Prostate gland (tissue), 2 donors: ENCODE measurements at regions of chr2 and their contacts with region 1.

Region 1: DNA sequence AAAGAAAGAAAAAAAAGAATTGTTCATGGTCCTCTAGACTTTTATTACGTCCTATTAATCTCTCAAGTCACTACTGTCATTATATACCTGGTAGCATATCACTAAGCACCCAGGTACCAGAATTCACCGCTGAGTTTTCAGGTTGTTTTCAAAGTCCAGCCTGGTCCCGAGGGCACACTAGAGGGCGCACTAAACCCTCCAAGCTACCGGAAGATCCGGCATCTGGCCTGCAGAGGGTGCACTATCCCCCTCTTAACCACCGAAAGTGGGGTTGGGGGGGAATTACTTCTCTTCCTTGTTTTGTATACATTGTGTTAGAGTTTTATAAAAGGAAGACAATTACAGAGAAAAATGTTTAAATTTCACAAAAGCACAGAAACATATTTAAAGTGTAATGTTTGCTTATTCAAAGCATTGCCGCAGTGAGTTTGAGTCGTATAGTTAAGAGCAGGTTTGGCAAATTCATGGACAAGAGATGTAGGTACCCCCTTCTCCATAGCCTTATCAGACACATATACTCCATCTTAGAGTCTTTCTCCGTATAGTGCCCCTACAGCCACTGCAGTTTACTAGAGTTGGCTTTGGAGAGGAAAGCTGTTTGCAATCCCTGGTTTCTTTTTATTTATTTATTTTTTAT is 19.2 kb downstream of the MOGAT1 start:
- DNase-seq: peak; percentile 52
- H3K4me3 ChIP-seq: no peak overlapping the region
- H3K27ac ChIP-seq: no peak overlapping the region
- H3K4me1 ChIP-seq: no peaks in the 10 kb centered on the region
- H3K27me3 ChIP-seq: no peaks in the 10 kb centered on the region
- CTCF ChIP-seq: peak; percentile 72 to 90 (median 86)
- POLR2A ChIP-seq: no peak

Region 2: GRCh38 chr2:222903234-222904220 is 212.8 kb after region 1 on chr2:
- intact Hi-C with region 1: loop called (anchors 5 kb)
- DNase-seq: peak; percentile 16
- H3K4me3 ChIP-seq: no peak overlapping the region
- H3K27ac ChIP-seq: no peak overlapping the region
- H3K4me1 ChIP-seq: peaks cover 5% of the 10 kb centered on the region
- H3K27me3 ChIP-seq: no peaks in the 10 kb centered on the region
- CTCF ChIP-seq: peak; percentile 26 to 77 (median 61)
- POLR2A ChIP-seq: no peak